ENCODE measurements at regions of chr17 and their contacts with region 1.

Region 1: DNA sequence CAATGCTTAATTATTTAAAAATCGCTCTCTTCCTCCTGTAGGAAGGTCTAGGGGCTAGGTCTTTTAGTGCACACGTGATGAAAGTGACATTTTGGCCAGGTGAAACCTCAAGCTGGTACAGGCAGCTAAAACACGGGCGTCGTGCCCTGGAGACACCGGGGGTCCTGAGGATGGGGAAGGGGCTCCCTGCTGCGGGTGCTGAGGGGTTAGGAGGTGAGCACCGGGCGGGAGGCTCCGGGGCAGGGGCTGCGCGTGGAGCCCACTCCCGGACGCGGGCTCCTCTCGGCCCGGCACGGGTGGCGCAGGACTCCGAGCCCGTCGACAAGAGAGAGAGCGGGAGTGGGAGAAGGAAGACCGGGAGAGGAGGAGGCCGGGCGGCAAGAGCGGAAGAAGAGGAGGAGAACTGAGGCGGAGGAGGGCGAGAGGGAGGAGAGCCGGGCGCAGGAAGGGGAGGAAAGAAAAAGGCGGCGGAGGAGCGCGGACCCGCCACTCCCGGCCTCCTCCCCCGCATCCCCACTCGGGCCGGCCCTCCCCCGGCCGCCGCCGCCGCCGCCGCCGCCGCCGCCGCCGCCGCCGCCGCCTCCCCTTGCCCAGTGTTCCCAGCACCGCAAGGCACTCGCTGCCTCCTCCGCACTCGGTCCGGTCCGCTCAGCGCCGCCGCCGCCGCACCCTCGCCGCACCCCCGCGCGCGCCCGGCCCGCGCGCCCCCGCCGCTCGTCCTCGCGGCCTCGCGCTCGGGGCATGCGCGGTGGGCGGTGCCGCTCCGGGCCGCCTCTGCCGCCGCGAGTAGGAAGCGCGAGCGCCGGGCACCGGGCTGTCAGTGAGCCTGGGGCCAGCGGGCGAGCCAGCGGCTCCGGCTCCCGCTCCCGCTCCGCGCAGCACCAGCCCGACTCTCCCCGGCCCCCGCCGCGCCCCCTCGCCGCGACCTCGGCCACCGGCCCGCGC is at the start of gene PRKCA:
- DNase-seq: peak; percentile 60 to 78 (median 73)
- H3K4me3 ChIP-seq: peak within 1 kb of the TSS; percentile 63 to 86
- H3K4me3 Mint-ChIP-seq: peak within 1 kb of the TSS; percentile 94 to 100 (median 99)
- H3K27ac ChIP-seq: peak within 1 kb of the TSS; percentile 59
- H3K27ac Mint-ChIP-seq: peak within 1 kb of the TSS; percentile 90 to 97 (median 96)
- H3K4me1 ChIP-seq: peaks cover 42% of the 10 kb centered on the region
- H3K4me1 Mint-ChIP-seq: peaks cover 38 to 63% (median 46%) of the 10 kb centered on the region in 4 donors
- H3K27me3 ChIP-seq: no peaks in the 10 kb centered on the region
- H3K27me3 Mint-ChIP-seq: no peaks in the 10 kb centered on the region
- total RNA-seq, gene PRKCA: 107 TPM

Region 2: DNA sequence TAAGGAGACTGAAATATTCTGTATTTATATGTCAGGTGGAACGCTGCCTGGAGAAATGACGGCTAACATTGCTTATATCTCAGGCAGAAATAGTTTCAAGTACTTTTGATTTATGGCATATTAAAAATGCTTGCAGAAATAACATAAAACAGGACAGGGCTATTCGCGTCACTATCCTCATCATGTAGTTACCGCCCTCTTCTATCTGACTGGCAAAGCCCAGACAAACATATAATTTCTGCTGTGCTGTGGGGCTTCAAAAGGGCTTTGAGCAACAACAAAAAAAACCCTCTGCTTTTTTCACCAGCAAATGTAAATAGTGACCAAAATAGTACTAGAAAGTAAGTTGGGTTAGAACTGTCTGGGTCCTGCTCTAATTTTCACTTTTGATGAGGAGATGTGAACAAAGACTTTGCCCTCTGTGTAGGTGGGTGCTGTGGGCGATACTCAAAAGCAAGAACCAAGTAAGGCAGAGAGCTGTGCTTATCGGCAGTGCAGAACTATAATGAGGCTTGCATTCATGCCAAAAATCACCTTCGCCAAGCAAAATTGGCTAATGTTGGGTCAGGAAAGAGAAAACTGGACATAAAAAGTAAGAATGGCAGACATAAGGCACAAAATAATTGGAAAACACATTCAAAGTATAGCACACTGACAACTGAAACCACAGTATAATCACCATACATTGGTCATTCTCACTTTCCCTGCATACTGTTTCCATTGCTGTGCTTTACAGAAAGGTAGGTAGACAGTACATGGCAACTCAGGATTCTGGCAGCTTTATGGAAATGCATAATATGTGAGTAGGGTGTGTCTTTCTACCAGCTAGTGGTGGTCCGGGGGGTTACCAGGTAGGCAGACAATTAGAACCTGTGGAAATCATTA is 589.4 kb before region 1 on chr17:
- CTCF ChIA-PET with region 1: no interaction called
- POLR2A ChIA-PET with region 1: no interaction called
- intact Hi-C with region 1: no loop called
- DNase-seq: no peak
- H3K4me3 ChIP-seq: no peak overlapping the region
- H3K4me3 Mint-ChIP-seq: peak overlapping the region in 3 of 8 donors; percentile 18 to 83 (median 78)
- H3K27ac ChIP-seq: no peak overlapping the region
- H3K27ac Mint-ChIP-seq: no peak overlapping the region
- H3K4me1 ChIP-seq: peaks cover 14% of the 10 kb centered on the region
- H3K4me1 Mint-ChIP-seq: peaks cover 9 to 21% (median 12%) of the 10 kb centered on the region in 4 donors
- H3K27me3 ChIP-seq: no peaks in the 10 kb centered on the region
- H3K27me3 Mint-ChIP-seq: peaks cover 0 to 3% of the 10 kb centered on the region in 2 donors

Region 3: DNA sequence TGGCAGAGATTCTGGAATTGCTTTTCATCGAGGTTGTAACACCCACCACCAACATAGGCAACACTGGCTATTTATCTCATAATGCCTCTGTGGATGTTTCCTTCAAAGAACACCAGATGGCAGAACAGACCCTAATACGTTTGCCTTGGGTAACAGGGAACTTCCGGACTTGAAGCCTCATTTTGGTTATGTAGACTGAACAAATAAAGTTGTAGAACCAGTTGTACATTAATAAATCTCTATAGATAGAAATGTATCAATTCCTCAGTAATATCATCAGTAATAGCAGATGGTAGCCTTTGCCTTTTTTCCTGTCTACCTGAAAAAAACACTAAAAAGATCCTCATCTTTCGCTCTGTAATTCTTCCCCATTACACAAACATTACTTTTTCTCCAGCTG is 47.0 kb before region 1 on chr17:
- CTCF ChIA-PET with region 1: interaction called, 3 read pairs
- POLR2A ChIA-PET with region 1: interaction called, 6 read pairs
- intact Hi-C with region 1: loop called (anchors 5 kb)
- DNase-seq: peak; percentile 64 to 74 (median 70)
- H3K4me3 ChIP-seq: no peak overlapping the region
- H3K4me3 Mint-ChIP-seq: peak overlapping the region; percentile 25 to 81 (median 66)
- H3K27ac ChIP-seq: peak overlapping the region; percentile 10
- H3K27ac Mint-ChIP-seq: peak overlapping the region; percentile 19 to 95 (median 81)
- H3K4me1 ChIP-seq: peaks cover 26% of the 10 kb centered on the region
- H3K4me1 Mint-ChIP-seq: peaks cover 16 to 25% (median 20%) of the 10 kb centered on the region in 4 donors
- H3K27me3 ChIP-seq: no peaks in the 10 kb centered on the region
- H3K27me3 Mint-ChIP-seq: no peaks in the 10 kb centered on the region

Region 4: DNA sequence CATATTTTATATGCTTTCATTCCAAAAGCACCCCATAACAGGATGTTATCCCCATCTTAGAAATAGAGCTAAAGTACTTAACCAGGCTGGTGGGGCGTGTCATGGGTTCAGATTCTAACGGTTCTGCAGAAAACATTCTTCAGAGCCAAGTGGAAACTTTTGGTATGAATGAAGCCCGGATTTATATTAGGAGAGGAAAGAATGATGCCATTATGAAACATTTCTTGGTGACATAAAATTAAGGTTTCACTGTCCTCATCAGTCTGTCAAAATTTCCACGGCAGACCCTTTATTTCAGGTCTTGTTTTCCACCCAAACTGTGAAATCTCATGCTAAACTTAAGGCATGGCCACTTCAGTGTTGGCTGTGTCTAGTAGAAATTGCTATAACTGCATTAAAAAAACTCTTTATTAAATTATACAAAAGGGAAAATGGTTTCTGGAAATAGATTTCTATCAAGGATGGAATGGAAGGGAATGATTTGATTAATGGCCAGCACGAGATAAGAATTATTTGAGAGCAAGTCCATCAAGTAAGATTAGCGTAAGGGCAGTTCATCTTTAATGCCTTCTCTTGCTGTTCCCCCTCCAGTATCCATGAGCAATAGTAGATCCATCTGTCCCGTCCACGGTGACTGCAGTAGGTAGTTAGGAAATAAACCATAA is 12.1 kb after region 1 on chr17:
- CTCF ChIA-PET with region 1: interaction called, 6 read pairs
- POLR2A ChIA-PET with region 1: interaction called, 14 read pairs
- intact Hi-C with region 1: no loop called
- DNase-seq: no peak
- H3K4me3 ChIP-seq: no peak overlapping the region
- H3K4me3 Mint-ChIP-seq: peak overlapping the region in 4 of 8 donors; percentile 7 to 49 (median 42)
- H3K27ac ChIP-seq: no peak overlapping the region
- H3K27ac Mint-ChIP-seq: peak overlapping the region in 3 of 7 donors; percentile 11 to 44 (median 13)
- H3K4me1 ChIP-seq: peaks cover 57% of the 10 kb centered on the region
- H3K4me1 Mint-ChIP-seq: peaks cover 62 to 85% (median 73%) of the 10 kb centered on the region in 4 donors
- H3K27me3 ChIP-seq: no peaks in the 10 kb centered on the region
- H3K27me3 Mint-ChIP-seq: no peaks in the 10 kb centered on the region

Region 5: GRCh38 chr17:66397486-66397885 is 95.4 kb after region 1 on chr17:
- CTCF ChIA-PET with region 1: no interaction called
- POLR2A ChIA-PET with region 1: interaction called, 7 read pairs
- intact Hi-C with region 1: loop called (anchors 2 kb)
- DNase-seq: no peak
- H3K4me3 ChIP-seq: no peak overlapping the region
- H3K4me3 Mint-ChIP-seq: peak overlapping the region in 4 of 8 donors; percentile 13 to 89 (median 70)
- H3K27ac ChIP-seq: no peak overlapping the region
- H3K27ac Mint-ChIP-seq: peak overlapping the region; percentile 49 to 90 (median 79)
- H3K4me1 ChIP-seq: peaks cover 65% of the 10 kb centered on the region
- H3K4me1 Mint-ChIP-seq: peaks cover 42 to 77% (median 61%) of the 10 kb centered on the region in 4 donors
- H3K27me3 ChIP-seq: no peaks in the 10 kb centered on the region
- H3K27me3 Mint-ChIP-seq: no peaks in the 10 kb centered on the region

Region 6: GRCh38 chr17:66466840-66467367 is 164.8 kb after region 1 on chr17:
- CTCF ChIA-PET with region 1: no interaction called
- POLR2A ChIA-PET with region 1: no interaction called
- intact Hi-C with region 1: no loop called
- DNase-seq: no peak
- H3K4me3 ChIP-seq: no peak overlapping the region
- H3K4me3 Mint-ChIP-seq: peak overlapping the region; percentile 23 to 81 (median 54)
- H3K27ac ChIP-seq: no peak overlapping the region
- H3K27ac Mint-ChIP-seq: peak overlapping the region in 6 of 7 donors; percentile 1 to 88 (median 68)
- H3K4me1 ChIP-seq: peaks cover 40% of the 10 kb centered on the region
- H3K4me1 Mint-ChIP-seq: peaks cover 45 to 88% (median 64%) of the 10 kb centered on the region in 4 donors
- H3K27me3 ChIP-seq: no peaks in the 10 kb centered on the region
- H3K27me3 Mint-ChIP-seq: no peaks in the 10 kb centered on the region

Region 7: GRCh38 chr17:66567234-66568170 is 265.4 kb after region 1 on chr17:
- CTCF ChIA-PET with region 1: interaction called, 4 read pairs
- POLR2A ChIA-PET with region 1: interaction called, 3 read pairs
- intact Hi-C with region 1: loop called (anchors 5 kb)
- DNase-seq: peak; percentile 60 to 77 (median 62)
- H3K4me3 ChIP-seq: no peak overlapping the region
- H3K4me3 Mint-ChIP-seq: peak overlapping the region in 1 of 8 donors; percentile 21
- H3K27ac ChIP-seq: no peak overlapping the region
- H3K27ac Mint-ChIP-seq: peak overlapping the region in 3 of 7 donors; percentile 8 to 68 (median 9)
- H3K4me1 ChIP-seq: peaks cover 8% of the 10 kb centered on the region
- H3K4me1 Mint-ChIP-seq: peaks cover 21 to 32% (median 26%) of the 10 kb centered on the region in 4 donors
- H3K27me3 ChIP-seq: no peaks in the 10 kb centered on the region
- H3K27me3 Mint-ChIP-seq: no peaks in the 10 kb centered on the region